HepG2 (cell line): ENCODE measurements at regions of chr4 and their contacts with region 1.

Region 1: GRCh38 chr4:112145326-112145819 is at the start of gene FAM241A:
- DNase-seq: peak; percentile 29
- ATAC-seq: peak; percentile 97
- H3K4me3 ChIP-seq: peak within 1 kb of the TSS; percentile 70 to 99 (median 84)
- H3K27ac ChIP-seq: peak within 1 kb of the TSS; percentile 58
- H3K4me1 ChIP-seq: peaks cover 31% of the 10 kb centered on the region
- H3K27me3 ChIP-seq: no peaks in the 10 kb centered on the region; a peak in 1 of 5 replicates
- CTCF ChIP-seq: peak; percentile 16; the same call in 1 of the 2 replicates
- EP300 ChIP-seq: no peak
- POLR2A ChIP-seq: peak in 1 of 2 experiments; percentile 75; a peak in 2 of 4 replicates
- RAD21 ChIP-seq: peak; percentile 43; the same call in 1 of the 2 replicates
- total RNA-seq, gene FAM241A: 0.69 and 0.74 TPM in 2 replicates

Region 2: DNA sequence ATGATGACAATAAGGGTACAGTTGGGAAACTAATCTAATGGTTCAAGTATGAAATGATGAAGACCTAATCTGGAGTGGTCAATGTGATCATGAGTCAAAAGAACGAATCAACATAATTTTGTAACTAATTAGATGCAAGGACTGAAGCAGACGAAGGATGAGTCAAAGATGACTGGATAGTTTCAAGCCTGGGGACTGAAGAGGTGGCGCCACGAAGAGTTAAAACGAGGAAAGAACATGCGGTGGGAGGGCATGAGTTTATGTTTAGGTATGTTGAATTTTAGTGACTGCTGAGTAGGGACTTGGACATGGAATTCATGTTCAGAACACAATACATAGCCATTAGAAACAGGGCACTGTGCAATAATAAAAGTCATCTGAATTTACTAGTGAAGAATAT is 221.6 kb before region 1 on chr4:
- CTCF ChIA-PET with region 1: no interaction called
- POLR2A ChIA-PET with region 1: no interaction called
- in situ Hi-C with region 1: no loop called
- intact Hi-C with region 1: no loop called
- DNase-seq: no peak
- ATAC-seq: no peak
- H3K4me3 ChIP-seq: no peak overlapping the region
- H3K27ac ChIP-seq: no peak overlapping the region
- H3K4me1 ChIP-seq: no peaks in the 10 kb centered on the region
- H3K27me3 ChIP-seq: no peaks in the 10 kb centered on the region
- CTCF ChIP-seq: no peak
- EP300 ChIP-seq: no peak
- POLR2A ChIP-seq: no peak
- RAD21 ChIP-seq: no peak

Region 3: GRCh38 chr4:112060212-112060611 is 85.2 kb before region 1 on chr4:
- CTCF ChIA-PET with region 1: no interaction called
- POLR2A ChIA-PET with region 1: no interaction called
- in situ Hi-C with region 1: no loop called
- intact Hi-C with region 1: no loop called
- DNase-seq: peak; percentile 7
- ATAC-seq: peak; percentile 47; the same call in 2 of the 3 replicates
- H3K4me3 ChIP-seq: no peak overlapping the region
- H3K27ac ChIP-seq: no peak overlapping the region
- H3K4me1 ChIP-seq: no peaks in the 10 kb centered on the region
- H3K27me3 ChIP-seq: no peaks in the 10 kb centered on the region
- CTCF ChIP-seq: peak; percentile 28
- EP300 ChIP-seq: no peak
- POLR2A ChIP-seq: no peak
- RAD21 ChIP-seq: no peak

Region 4: DNA sequence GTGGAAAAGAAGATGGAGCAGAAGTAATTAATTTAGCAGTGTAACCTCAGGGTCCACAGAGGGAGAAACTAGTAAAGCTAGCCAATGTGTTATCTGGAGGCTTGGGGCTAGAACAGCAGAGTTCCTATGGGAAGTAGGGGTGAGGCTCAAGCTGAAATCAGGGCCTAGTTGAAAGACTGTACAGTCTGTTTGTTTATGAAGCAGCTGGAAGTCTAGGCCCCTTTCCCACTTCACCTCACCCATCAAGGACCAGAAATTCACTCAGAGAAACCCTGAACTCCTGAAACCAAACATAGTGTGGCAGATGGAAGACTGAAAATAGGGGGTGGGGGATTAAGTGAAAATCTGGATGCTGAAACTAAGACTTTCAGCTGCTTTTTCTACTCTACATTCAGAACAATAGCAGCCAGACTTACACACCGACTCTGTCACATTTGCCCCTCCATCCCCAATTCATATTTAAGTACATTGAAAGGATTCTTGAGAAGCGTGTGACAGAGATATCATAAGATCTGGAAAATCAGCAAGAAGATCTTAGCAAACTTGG is 32.7 kb before region 1 on chr4:
- CTCF ChIA-PET with region 1: no interaction called
- POLR2A ChIA-PET with region 1: interaction called, 3 read pairs
- in situ Hi-C with region 1: no loop called
- intact Hi-C with region 1: loop called (anchors 2 kb)
- DNase-seq: peak; percentile 14
- ATAC-seq: peak; percentile 63
- H3K4me3 ChIP-seq: no peak overlapping the region; a peak in 1 of 6 replicates
- H3K27ac ChIP-seq: no peak overlapping the region
- H3K4me1 ChIP-seq: peaks cover 34% of the 10 kb centered on the region
- H3K27me3 ChIP-seq: peaks cover 0 to 4% of the 10 kb centered on the region in 2 experiments; a peak in 2 of 5 replicates
- CTCF ChIP-seq: no peak
- EP300 ChIP-seq: no peak
- POLR2A ChIP-seq: no peak
- RAD21 ChIP-seq: no peak

Region 5: GRCh38 chr4:112214390-112215264 is 69.3 kb after region 1 on chr4:
- CTCF ChIA-PET with region 1: no interaction called
- POLR2A ChIA-PET with region 1: no interaction called
- in situ Hi-C with region 1: no loop called
- intact Hi-C with region 1: loop called (anchors 2 kb)
- DNase-seq: peak; percentile 51
- ATAC-seq: 0 out of 3 replicates have a peak, but pooled peaks have one; percentile 35
- H3K4me3 ChIP-seq: no peak overlapping the region
- H3K27ac ChIP-seq: no peak overlapping the region
- H3K4me1 ChIP-seq: peaks cover 27% of the 10 kb centered on the region
- H3K27me3 ChIP-seq: no peaks in the 10 kb centered on the region
- CTCF ChIP-seq: peak; percentile 50
- EP300 ChIP-seq: no peak
- POLR2A ChIP-seq: no peak
- RAD21 ChIP-seq: peak; percentile 44; the same call in 1 of the 2 replicates